ENCODE measurements at regions of chr11 and their contacts with region 1.

Region 1: DNA sequence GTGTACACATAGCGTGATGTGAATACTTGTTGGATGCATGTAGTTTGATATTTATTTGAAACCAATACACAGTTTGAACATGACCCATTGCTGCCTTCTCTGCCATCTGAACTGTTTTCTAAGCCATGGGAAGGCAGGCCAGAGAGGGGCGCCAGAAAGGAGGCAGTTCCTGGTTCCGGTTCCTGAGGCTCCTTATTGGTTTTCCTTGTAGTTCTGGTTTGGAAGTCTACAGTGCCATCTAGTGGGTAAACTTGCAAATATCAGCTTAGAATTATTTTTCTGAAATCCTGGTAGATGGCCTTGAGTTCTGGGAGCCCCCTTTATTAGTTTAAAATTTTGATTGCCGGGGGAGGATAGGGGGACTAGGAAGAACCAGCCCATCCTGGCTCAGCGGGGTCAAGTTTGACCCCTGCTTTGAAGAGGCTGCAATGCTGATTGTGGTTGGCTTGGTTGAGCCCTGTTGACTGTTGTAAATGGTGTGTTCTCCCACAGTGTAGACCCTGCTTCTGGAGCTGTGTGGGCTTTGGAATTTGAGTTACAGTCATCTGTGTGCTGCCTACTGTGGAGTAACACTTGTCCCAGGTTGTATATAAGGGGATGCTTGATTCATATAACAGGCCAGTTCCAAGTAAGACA is 48.4 kb downstream of the GRAMD1B start:
- DNase-seq: peak in 6 of 10 donors; percentile 30 to 92 (median 54)

Region 2: DNA sequence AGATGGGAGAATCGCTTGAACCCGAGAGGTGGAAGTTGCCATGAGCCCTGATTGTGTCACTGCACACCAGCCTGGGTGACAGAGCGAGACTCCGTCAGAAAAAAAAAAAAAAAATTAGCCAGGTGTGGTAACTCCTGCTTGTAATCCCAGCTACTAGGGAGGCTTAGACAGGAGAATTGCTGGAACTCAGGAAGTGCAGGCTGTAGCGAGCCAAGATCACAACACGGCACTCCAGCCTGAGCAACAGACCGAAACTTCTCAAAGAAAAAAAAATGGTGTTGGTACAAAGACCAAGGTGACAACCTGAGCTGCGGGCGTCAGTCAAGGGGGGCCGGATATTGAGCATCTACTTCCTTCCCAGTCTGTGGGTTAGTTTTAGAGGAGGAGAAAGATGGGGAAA is 368.1 kb before region 1 on chr11:
- intact Hi-C with region 1: loop called (anchors 10 kb)
- DNase-seq: no peak

Region 3: DNA sequence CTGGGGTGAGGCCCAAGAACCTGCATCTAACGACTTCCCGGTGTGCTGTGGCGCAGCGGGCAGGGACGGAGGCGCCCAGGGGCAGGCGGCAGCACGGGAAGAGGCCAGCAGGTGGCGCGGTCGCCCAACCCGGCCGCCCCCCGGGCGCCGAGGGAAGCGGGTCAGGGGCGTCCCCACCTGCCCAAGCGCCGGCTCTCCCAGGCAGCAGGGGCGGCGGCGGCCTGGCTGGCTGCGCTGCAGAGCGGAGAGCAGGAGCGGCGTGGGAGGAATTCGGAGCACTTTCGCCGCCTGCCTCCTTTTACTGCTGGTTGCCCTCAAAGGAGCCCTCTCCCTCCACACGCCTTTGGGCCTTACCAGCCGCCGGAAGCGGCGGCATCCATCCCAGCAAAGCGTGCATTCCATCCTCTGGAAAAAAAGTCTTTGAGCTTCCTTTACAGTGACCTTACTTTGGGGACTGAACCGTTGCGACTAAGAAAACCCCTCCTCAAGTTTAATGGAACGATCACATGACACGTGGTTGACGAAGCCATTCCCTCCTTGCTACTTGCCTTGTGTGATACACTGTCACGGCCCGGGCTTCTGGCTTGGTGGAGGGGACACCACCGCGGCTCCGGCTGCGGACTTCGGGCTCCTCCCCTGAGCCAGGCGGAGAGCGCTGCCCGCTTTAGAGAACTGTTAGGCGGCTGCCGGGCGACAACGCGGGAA is 176.6 kb before region 1 on chr11:
- intact Hi-C with region 1: loop called (anchors 1 kb)
- DNase-seq: peak; percentile 25 to 94 (median 66)

Region 4: GRCh38 chr11:123407130-123407995 is 71.1 kb before region 1 on chr11:
- intact Hi-C with region 1: loop called (anchors 2 kb)
- DNase-seq: peak in 3 of 10 donors; percentile 19 to 44 (median 37)

Region 5: GRCh38 chr11:123616505-123617198 is 138.2 kb after region 1 on chr11:
- intact Hi-C with region 1: no loop called
- DNase-seq: peak; percentile 16 to 94 (median 60)

Measured in posterior cingulate gyrus (tissue), 11 donors.